WTC11 (cell line): ENCODE measurements at regions of chr12 and their contacts with region 1.

Region 1: DNA sequence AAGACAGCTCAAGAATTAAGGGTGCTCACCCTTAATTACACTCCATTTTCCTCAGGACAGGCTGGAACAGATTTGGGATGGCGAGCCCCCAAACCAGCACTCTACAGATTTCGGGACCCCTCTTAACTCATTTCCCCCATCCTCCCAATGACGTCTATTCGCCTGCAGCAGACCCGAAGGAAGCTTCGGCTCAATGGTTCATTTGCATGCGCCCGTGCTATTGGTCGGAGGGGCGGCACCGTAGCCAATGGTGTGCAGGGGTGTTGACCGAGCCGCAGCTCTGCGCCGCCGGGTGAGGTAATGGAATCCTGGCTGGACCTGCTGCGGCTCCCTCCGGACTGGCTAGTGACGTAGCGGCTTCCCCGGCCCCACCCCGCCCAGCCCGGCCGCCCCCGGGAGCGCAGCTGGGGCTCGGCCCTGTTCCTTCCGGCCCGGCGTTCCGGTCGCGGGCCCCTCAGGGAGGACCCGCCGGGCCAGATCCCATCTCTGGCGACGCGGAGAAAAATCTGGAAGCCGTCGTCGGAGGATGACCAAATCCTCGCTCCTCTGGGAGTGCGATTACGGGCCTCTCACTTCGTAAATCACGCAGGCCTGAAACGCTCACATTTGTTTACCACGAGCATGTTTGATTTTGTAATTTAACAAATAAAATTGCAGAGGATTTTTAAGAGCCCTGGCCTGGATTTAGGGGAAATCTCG is 18.3 kb upstream of the NR4A1 start:
- DNase-seq: peak; percentile 97
- ATAC-seq: peak; percentile 93
- H3K4me3 Mint-ChIP-seq: peak overlapping the region; percentile 69
- H3K27ac Mint-ChIP-seq: peak overlapping the region; percentile 95
- H3K4me1 Mint-ChIP-seq: peaks cover 31% of the 10 kb centered on the region
- H3K27me3 Mint-ChIP-seq: peaks cover 46% of the 10 kb centered on the region
- CTCF ChIP-seq: no peak

Region 2: DNA sequence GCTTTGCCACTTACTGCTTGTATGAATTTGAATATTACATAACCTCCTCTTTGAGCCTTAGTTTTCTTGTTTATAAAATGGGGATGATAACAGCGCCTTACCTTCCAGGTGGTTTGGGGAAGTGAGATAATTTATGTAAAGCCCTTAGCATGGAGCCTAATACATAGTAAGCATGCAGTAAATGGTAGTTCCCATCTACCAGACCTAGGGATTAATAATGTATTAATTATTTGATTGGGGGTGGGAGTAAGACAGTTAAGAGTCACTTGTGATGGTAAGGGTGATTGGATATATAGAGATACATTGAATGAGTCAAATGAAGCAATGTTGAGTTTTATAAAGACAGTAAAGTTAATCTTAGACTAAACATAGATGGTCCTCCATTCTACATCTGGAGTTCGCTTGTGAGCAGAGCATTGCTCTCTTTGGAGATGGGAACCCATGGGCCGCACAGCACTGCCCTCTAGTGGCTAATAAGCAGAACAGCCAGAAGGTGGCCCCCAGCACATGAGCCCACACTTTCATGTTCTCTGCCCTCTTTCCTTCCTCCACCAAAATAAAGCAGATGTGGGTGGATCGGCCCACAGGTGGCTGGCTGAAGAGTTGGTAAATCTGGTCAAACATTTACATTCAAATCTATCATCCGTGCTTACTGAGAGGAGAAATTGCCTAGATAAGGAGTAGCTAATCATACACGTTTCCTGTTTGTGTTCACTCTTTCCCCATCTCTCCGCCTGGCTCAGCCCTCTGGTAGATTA is 52.7 kb before region 1 on chr12:
- CTCF ChIA-PET with region 1: interaction called, 1,431 read pairs
- POLR2A ChIA-PET with region 1: no interaction called
- DNase-seq: peak; percentile 68
- ATAC-seq: peak; percentile 96
- H3K4me3 Mint-ChIP-seq: no peak overlapping the region
- H3K27ac Mint-ChIP-seq: no peak overlapping the region
- H3K4me1 Mint-ChIP-seq: no peaks in the 10 kb centered on the region; the same call in 1 of the 2 replicates
- H3K27me3 Mint-ChIP-seq: no peaks in the 10 kb centered on the region
- CTCF ChIP-seq: peak; percentile 84

Region 3: GRCh38 chr12:52148466-52149398 is 115.8 kb after region 1 on chr12:
- CTCF ChIA-PET with region 1: no interaction called
- POLR2A ChIA-PET with region 1: no interaction called
- DNase-seq: no peak
- ATAC-seq: peak; percentile 43
- H3K4me3 Mint-ChIP-seq: no peak overlapping the region
- H3K27ac Mint-ChIP-seq: no peak overlapping the region
- H3K4me1 Mint-ChIP-seq: peaks cover 25% of the 10 kb centered on the region
- H3K27me3 Mint-ChIP-seq: no peaks in the 10 kb centered on the region
- CTCF ChIP-seq: no peak